MCF 10A (cell line): ENCODE measurements at regions of chr1 and their contacts with region 1.

Region 1: GRCh38 chr1:23772049-23772853 is 6.0 kb upstream of the PITHD1 start:
- DNase-seq: peak; percentile 86
- H3K4me3 Mint-ChIP-seq: no peak overlapping the region
- H3K27ac Mint-ChIP-seq: no peak overlapping the region
- H3K4me1 Mint-ChIP-seq: no peaks in the 10 kb centered on the region
- H3K27me3 Mint-ChIP-seq: no peaks in the 10 kb centered on the region
- CTCF ChIP-seq: peak; percentile 92

Region 2: DNA sequence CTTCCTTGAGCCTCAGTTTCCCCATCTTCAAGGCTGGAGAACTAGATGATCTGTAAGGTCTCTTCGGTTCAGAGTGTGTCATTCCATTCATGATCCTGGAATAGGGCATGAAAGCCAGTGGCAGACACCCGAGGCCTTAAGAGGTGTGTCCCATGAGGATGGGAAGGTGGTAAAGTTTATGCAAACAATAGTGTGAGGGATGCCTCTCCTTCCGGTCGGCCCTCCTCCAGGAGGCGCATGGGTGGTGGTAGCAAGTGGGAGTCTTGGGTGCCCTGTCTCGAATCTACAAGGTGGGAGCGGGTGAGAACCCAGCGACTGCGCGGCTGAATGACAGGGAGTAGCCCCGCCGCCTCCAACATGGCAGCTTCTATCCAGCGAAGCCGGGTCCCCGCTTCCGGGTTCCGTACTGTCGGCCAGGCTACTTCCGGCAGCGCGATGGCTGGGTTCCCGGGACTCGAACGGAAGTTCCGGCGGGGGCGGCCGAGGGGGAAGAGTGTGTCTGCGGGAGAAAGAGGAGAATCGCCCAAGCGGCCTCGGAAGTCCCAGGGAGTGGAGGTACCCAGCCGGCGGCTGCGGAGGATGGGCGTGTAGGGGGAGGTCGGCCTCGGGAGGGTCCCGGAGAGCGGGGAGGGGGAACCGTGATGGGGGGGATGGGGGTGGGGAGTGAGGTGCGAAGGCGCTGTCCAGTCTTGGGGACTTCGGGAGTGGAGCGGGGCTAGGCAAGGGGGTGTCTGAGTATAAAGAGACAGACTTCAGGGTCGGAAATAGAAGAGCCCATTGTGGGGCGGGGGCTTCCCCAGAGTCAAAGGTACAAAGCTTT is 18.7 kb after region 1 on chr1 and contains the start of gene LYPLA2:
- CTCF ChIA-PET with region 1: interaction called, 7 read pairs
- POLR2A ChIA-PET with region 1: interaction called, 395 read pairs
- intact Hi-C with region 1: no loop called
- DNase-seq: peak; percentile 91
- H3K4me3 Mint-ChIP-seq: peak within 1 kb of the TSS; percentile 100
- H3K27ac Mint-ChIP-seq: peak within 1 kb of the TSS; percentile 94
- H3K4me1 Mint-ChIP-seq: peaks cover 23% of the 10 kb centered on the region
- H3K27me3 Mint-ChIP-seq: no peaks in the 10 kb centered on the region
- CTCF ChIP-seq: no peak
- total RNA-seq, gene LYPLA2: 27.8 and 35.7 TPM in 2 replicates

Region 3: DNA sequence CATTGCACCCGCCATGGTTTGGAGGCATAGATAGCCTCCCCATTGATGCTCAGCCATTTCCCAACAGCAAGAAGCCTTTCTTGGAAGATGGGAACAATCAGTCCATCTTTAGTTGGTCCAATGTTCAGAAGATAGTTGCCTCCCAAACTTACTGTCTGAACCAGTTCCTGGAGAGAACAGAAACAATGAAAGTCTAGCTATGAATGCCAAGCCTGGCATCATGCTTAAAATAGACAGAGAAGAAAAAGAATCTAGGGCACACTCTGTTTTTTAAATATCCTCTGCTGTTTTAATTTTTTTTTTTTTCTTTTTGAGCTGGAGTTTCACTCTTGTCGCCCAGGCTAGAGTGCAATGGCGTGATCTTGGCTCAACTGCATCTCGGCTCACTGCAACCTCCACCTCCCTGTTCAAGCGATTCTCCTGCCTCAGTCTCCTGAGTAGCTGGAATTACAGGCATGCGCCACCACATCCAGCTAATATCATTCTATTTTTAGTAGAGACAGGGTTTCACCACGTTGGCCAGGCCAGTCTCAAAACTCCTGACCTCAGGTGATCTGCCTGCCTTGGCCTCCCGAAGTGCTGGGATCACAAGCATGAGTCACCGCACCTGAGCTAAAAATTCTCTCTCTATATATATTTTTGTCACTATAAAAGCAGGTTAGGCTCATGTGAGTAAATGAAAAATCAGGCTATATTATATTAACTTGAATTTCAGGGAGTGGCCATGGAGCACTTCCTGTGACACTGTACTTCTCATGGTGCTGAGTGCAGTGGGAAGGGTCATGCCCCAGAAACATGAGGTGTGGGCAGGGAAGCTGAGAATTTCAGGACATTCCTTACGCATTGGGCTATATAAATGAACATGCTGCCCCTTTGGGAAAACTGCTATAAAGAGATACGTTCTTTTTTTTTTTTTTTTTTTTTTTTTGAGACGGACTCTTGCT is 76.7 kb after region 1 on chr1:
- CTCF ChIA-PET with region 1: no interaction called
- POLR2A ChIA-PET with region 1: no interaction called
- intact Hi-C with region 1: no loop called
- DNase-seq: no peak
- H3K4me3 Mint-ChIP-seq: no peak overlapping the region
- H3K27ac Mint-ChIP-seq: no peak overlapping the region
- H3K4me1 Mint-ChIP-seq: no peaks in the 10 kb centered on the region
- H3K27me3 Mint-ChIP-seq: no peaks in the 10 kb centered on the region
- CTCF ChIP-seq: no peak